Panc1 (cell line): ENCODE measurements at regions of chr10 and their contacts with region 1.

Region 1: GRCh38 chr10:70583669-70584037 is 18.9 kb downstream of the PRF1 start:
- DNase-seq: no peak
- ATAC-seq: no peak
- H3K4me3 ChIP-seq: no peak overlapping the region
- H3K27ac ChIP-seq: no peak overlapping the region
- H3K4me1 ChIP-seq: no peaks in the 10 kb centered on the region
- H3K27me3 ChIP-seq: peaks cover 8% of the 10 kb centered on the region
- CTCF ChIP-seq: no peak

Region 2: GRCh38 chr10:70241081-70241480 is 342.6 kb before region 1 on chr10:
- CTCF ChIA-PET with region 1: no interaction called
- POLR2A ChIA-PET with region 1: no interaction called
- in situ Hi-C with region 1: no loop called
- intact Hi-C with region 1: no loop called
- DNase-seq: no peak
- ATAC-seq: no peak
- H3K4me3 ChIP-seq: no peak overlapping the region
- H3K27ac ChIP-seq: no peak overlapping the region
- H3K4me1 ChIP-seq: no peaks in the 10 kb centered on the region
- H3K27me3 ChIP-seq: peaks cover 7% of the 10 kb centered on the region
- CTCF ChIP-seq: no peak

Region 3: GRCh38 chr10:70391654-70392053 is 192.0 kb before region 1 on chr10:
- CTCF ChIA-PET with region 1: no interaction called
- POLR2A ChIA-PET with region 1: interaction called, 11 read pairs
- in situ Hi-C with region 1: no loop called
- intact Hi-C with region 1: no loop called
- DNase-seq: no peak
- ATAC-seq: no peak
- H3K4me3 ChIP-seq: no peak overlapping the region
- H3K27ac ChIP-seq: no peak overlapping the region
- H3K4me1 ChIP-seq: peaks cover 6% of the 10 kb centered on the region; the same call in 1 of the 2 replicates
- H3K27me3 ChIP-seq: no peaks in the 10 kb centered on the region; the same call in 1 of the 2 replicates
- CTCF ChIP-seq: no peak